Mammary epithelial cell (primary cell): ENCODE measurements at regions of chr1 and their contacts with region 1.

Region 1: DNA sequence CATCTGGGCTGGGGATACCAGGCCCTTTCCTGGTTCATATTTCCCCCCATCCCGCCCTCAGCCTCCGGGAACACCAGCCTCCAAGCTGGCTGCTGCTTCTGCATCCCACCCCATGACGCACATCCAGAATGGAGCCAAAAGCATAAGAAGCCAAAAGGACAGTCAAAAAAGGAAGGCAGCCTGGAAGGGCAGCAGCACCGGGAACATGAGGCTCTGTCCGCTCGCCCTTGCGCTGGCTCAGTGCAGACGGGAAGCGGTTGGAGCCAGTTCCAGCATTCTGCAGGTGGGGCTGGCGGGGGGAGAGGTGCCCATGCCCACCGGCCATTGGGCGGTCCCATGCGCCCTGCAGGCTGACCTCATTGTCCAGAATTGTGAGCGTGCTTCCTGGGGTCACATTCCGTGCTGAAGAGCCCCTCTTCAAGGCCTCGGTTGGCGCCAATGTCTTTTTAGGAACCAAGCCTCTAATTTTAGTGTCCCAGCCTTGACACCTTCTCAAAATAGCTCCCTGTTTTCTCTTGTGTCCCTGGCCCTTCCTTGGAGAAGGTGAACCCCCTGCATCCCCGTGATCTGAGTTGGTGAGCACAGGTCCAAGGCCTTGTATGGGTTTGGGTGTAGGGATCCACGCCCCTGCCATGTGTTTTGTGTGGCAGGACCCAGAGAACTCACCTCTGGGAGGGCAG is 28.4 kb upstream of the NPPB start:
- DNase-seq: no peak
- H3K4me3 ChIP-seq: no peak overlapping the region
- H3K27ac ChIP-seq: no peak overlapping the region
- H3K4me1 ChIP-seq: no peaks in the 10 kb centered on the region
- H3K27me3 ChIP-seq: no peaks in the 10 kb centered on the region
- CTCF ChIP-seq: no peak

Region 2: DNA sequence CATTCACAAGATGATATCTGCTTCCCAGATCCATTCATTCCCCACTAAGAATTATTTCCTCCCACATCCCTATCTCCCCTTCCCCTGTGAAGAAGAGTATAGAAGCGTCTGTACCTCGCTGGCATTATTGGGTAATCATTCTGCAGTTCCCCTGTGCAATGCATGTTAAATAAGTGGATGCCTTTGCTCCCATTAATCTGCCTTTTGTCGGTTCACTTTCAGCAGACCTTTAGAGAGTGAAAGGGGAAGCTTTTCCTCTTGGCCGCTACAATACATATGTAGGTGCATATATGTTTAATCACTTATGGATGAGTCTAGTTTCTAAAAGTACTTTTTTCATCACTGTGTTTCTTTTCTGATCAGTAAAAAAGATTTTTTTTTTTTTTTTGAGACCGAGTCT is 74.1 kb before region 1 on chr1:
- CTCF ChIA-PET with region 1: no interaction called
- dilution Hi-C with region 1: loop called (anchors 5 kb)
- in situ Hi-C with region 1: no loop called
- intact Hi-C with region 1: no loop called
- DNase-seq: no peak
- H3K4me3 ChIP-seq: no peak overlapping the region
- H3K27ac ChIP-seq: no peak overlapping the region
- H3K4me1 ChIP-seq: peaks cover 3% of the 10 kb centered on the region
- H3K27me3 ChIP-seq: no peaks in the 10 kb centered on the region
- CTCF ChIP-seq: no peak

Region 3: GRCh38 chr1:11851180-11851579 is 35.9 kb before region 1 on chr1:
- CTCF ChIA-PET with region 1: no interaction called
- dilution Hi-C with region 1: loop called (anchors 5 kb)
- in situ Hi-C with region 1: no loop called
- intact Hi-C with region 1: no loop called
- DNase-seq: no peak
- H3K4me3 ChIP-seq: no peak overlapping the region
- H3K27ac ChIP-seq: no peak overlapping the region
- H3K4me1 ChIP-seq: no peaks in the 10 kb centered on the region
- H3K27me3 ChIP-seq: no peaks in the 10 kb centered on the region
- CTCF ChIP-seq: no peak